ENCODE measurements at regions of chr21 and their contacts with region 1.

Region 1: DNA sequence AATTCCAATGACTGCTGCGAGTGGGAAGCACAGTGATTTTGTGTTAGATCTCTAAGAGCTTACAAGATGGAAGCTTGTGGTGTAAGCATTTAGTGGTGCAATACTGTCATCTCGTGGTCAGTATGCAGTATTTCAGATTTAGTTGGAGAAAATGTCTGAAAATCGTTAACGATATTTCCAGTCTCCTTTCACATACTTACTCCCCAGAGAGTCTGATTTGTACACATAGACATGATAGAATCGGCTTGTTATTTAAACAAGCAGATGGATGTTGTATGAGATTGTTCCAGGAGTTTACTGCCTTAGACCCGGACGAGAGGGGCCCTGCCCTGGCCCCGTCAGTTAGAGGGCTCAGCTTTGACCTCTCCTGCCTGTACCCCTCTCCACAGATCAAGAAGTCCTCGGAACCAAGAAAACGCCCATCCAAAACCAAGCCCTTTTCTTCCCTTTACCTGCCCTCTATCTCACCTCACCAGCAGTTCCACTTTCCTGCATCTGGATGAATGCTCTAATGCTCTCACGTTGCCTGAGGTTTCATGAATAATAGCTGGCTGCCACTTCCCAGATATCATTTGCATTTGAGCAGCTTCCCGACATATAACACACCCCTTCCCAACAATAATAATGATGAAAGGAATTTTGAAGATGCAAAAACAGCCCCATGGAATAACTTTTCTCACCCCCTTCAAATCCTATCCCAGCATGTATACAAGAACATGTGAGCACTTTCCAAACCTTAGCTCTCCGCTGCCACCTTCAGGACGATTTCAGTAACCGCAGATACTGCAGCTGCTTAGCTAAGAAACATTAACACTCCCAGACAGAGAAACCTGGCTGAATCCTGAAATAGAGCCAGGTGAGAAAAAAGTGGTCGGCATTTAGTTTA is 247.3 kb downstream of the LTN1 start:
- DNase-seq: peak; percentile 67 to 79 (median 78)
- ATAC-seq: peak; percentile 88 to 89
- H3K4me3 ChIP-seq: peak overlapping the region; percentile 78
- H3K27ac ChIP-seq: peak overlapping the region; percentile 84
- H3K4me1 ChIP-seq: no peaks in the 10 kb centered on the region
- H3K27me3 ChIP-seq: no peaks in the 10 kb centered on the region

Region 2: DNA sequence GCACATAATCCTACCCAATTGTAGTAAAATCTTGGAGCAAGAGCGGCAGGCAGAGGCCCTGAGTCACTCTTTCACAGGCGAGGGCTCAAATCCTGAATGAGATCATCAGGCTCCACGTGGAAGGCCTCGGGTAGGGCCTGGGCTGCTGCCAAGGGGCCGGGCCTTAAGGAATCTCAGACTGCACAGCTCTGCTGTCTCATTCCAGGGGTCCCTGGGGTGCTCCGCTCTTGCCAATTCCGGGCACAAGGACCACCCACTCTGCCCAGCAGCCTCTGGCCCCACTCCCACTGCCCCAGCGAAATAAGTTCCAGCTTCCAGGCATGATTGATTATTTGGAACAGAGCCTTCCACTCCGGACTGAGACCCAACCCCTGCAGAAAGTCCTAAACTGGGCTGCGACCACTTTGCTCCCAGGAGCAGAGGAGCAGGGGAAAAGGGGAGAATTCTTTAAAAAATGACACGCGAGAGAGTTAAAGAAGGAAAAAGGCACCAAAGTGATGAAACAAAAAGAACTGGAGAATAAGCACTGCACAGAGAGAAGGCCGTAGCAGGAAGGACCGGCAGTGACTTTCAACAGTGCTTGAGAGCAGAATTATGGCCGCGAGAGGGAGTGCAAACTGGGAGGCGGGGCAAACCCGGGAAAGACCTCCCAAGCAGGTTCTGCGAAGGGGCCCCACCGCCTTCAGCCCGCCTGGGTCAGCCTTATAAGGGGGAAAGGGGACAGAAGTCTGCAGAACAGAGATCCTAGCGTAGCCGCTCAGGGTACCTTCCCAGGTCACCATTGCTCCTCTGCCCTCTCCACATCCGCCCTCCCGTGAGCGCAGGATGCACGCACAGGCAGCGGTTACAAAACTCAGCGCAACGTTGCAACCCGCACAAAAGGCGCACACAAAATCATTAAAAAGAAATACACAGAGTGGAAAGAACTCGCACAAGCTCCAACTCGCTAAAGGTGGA is 1902.1 kb before region 1 on chr21:
- intact Hi-C with region 1: loop called (anchors 5 kb)
- DNase-seq: peak; percentile 94 to 98 (median 97)
- ATAC-seq: peak; percentile 50 to 67
- H3K4me3 ChIP-seq: peak overlapping the region; percentile 77
- H3K27ac ChIP-seq: peak overlapping the region; percentile 95
- H3K4me1 ChIP-seq: peaks cover 6% of the 10 kb centered on the region
- H3K27me3 ChIP-seq: no peaks in the 10 kb centered on the region

Region 3: DNA sequence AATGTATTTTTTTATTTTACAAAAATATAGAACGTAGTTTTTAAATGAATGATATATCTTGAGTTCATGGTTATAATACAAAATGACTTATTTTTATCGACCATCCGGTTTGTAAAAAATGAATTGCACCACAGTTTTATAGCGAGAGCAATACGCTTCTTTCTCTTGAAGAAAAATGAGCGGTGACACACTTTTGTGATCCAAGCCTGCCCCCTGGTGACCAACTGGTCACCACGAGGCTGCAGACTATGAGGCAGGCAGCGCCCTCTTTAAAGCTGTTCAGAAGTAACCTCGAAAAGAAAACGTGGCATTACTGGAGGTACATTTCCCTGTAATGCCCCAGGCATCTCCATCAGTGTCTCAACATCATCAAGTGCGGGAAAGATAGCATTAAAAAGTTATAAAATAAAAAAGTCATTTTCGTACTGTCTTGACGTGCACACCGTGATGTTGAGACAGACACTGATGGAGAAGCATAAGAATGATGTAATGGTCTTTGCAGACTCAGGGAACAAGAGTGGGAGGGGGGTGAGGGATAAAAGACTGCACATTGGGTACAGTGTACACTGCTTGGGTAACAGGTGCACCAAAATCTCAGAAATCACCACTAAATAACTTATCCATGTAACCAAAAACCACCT is 1044.3 kb before region 1 on chr21:
- intact Hi-C with region 1: loop called in 1 of 4 experiments (anchors 10 kb)
- DNase-seq: peak; percentile 85 to 94 (median 90)
- ATAC-seq: peak; percentile 81 to 89
- H3K4me3 ChIP-seq: no peak overlapping the region
- H3K27ac ChIP-seq: no peak overlapping the region
- H3K4me1 ChIP-seq: no peaks in the 10 kb centered on the region
- H3K27me3 ChIP-seq: no peaks in the 10 kb centered on the region

Region 4: DNA sequence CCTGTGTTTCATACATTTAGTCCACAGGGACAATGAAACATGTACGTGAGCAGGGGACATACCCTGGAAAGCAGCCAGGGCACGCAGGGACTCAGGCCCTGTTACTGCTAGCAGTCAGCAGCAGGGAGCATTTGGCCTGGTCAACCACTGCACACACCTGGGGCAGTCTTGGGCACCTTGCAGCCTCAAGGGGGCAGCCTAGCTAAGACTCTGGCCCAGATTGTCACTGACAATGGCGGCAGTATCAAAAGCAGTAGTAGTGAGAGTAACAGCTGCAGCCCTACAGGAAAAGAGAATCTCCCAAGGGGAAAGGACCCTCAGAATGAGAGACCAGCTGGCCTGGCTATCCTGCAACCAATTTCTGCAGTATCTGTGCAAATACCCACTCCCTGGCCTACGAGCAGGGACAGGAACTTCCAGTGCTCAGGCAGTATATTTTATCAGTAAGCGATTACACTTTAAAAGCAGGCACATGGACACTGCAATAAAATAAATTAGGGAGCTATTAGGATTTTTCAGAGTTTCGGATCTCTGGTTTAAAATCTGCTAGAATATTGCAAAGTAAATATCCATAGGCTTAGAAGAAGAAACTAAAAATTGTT is 228.3 kb before region 1 on chr21:
- intact Hi-C with region 1: loop called in 3 of 4 experiments (anchors 5 to 10 kb)
- DNase-seq: peak; percentile 56 to 88 (median 83)
- ATAC-seq: peak; percentile 82 to 95
- H3K4me3 ChIP-seq: no peak overlapping the region
- H3K27ac ChIP-seq: peak overlapping the region; percentile 57
- H3K4me1 ChIP-seq: no peaks in the 10 kb centered on the region
- H3K27me3 ChIP-seq: no peaks in the 10 kb centered on the region

Region 5: DNA sequence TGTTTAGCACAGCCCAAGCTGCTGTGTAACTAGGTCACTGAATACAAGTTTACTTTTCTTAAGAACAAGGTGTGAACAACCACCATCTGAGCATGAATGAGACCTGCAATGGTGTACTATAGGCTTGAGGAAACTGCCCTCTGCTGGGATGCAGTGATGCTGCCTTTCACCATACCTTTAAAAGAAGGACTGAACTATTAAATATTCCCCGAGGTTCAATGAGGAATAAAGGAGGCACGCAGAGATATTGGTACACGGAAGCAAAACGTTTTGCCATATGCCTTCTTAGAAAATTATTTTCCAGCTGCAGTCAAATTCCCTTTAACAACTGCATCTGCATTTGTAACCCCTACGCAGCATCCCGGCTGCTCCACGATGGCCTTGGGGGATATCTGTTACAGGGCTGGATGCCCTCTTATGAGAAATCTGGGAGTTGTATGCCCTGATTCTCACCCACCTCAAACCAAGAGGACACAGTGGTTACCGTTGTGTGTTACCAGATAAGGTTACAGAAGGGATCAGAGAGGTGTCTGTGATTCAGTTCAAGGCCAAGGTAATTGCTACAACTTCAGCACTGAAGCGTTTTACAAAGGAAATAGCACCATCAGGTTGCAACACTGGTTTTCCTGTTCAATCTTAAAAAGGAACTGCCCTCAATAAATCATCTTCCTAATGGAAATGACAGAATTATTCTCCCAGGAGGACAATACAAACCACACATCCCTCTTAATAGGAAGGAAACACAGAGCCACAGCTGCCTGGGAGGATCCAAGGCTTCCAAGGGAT is 223.2 kb before region 1 on chr21:
- intact Hi-C with region 1: loop called in 3 of 4 experiments (anchors 5 to 10 kb)
- DNase-seq: peak in 2 of 3 donors; percentile 8 to 27
- ATAC-seq: peak; percentile 64 to 82
- H3K4me3 ChIP-seq: no peak overlapping the region
- H3K27ac ChIP-seq: peak overlapping the region; percentile 7
- H3K4me1 ChIP-seq: peaks cover 1% of the 10 kb centered on the region
- H3K27me3 ChIP-seq: no peaks in the 10 kb centered on the region

Region 6: DNA sequence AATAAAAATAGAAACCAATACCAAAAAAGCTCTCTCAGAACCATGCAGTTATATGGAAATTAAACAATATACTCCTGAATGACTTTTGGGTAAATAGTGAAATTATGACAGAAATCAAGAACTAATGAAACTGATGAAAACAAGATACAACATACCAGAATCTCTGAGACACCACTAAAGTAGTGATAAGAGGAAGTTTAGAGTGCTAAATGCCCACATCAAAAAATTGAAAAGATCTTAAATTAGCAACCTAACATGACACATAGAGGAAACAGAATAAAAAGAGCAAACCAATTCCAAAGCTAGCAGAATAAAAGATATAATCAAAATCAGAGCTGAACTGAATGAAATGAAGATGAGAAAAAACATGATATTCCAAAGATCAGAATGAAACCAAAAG is 183.6 kb before region 1 on chr21:
- intact Hi-C with region 1: no loop called
- DNase-seq: no peak
- ATAC-seq: no peak
- H3K4me3 ChIP-seq: no peak overlapping the region
- H3K27ac ChIP-seq: no peak overlapping the region
- H3K4me1 ChIP-seq: no peaks in the 10 kb centered on the region
- H3K27me3 ChIP-seq: no peaks in the 10 kb centered on the region

Region 7: DNA sequence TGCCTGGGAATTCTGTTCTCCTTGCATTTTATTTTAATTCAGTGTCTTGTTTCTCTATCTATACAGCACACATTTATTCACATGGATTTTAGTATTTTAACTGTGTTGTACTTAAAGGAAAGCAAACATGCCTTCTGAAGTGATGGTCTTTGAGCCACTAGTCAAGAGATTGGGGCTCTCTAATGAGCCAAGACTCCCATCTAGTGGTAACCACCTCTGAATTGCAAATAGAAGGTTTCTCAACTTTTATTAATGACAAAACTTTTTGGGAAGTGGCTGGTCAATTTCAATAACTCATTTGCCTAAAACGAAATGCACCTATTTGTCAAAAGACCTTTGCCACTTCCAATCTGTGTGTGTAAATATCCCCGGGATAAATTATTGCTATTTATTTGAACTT is 47.7 kb after region 1 on chr21:
- intact Hi-C with region 1: loop called in 1 of 4 experiments (anchors 5 kb)
- DNase-seq: no peak
- ATAC-seq: peak; percentile 39 to 66
- H3K4me3 ChIP-seq: no peak overlapping the region
- H3K27ac ChIP-seq: no peak overlapping the region
- H3K4me1 ChIP-seq: peaks cover 1% of the 10 kb centered on the region
- H3K27me3 ChIP-seq: no peaks in the 10 kb centered on the region

Region 8: GRCh38 chr21:28938726-28939125 is 193.4 kb after region 1 on chr21:
- intact Hi-C with region 1: loop called in 1 of 4 experiments (anchors 10 kb)
- DNase-seq: no peak
- ATAC-seq: no peak
- H3K4me3 ChIP-seq: no peak overlapping the region
- H3K27ac ChIP-seq: no peak overlapping the region
- H3K4me1 ChIP-seq: no peaks in the 10 kb centered on the region
- H3K27me3 ChIP-seq: no peaks in the 10 kb centered on the region

Measured in right cardiac atrium (tissue), 5 donors.